SK-N-SH (cell line): ENCODE measurements at regions of chr2 and their contacts with region 1.

Region 1: GRCh38 chr2:113198790-113199612 is 25.2 kb downstream of the PSD4 start:
- DNase-seq: peak; percentile 95
- H3K4me3 ChIP-seq: peak overlapping the region; percentile 66 to 81
- H3K27ac ChIP-seq: no peak overlapping the region; a peak in 1 of 4 replicates
- H3K4me1 ChIP-seq: no peaks in the 10 kb centered on the region; a peak in 1 of 4 replicates
- H3K27me3 ChIP-seq: peaks cover 10% of the 10 kb centered on the region; the same call in 1 of the 2 replicates
- CTCF ChIP-seq: peak; percentile 83
- EP300 ChIP-seq: no peak
- RAD21 ChIP-seq: peak; percentile 36

Region 2: GRCh38 chr2:113181258-113182051 is 17.5 kb before region 1 on chr2:
- CTCF ChIA-PET with region 1: interaction called, 27 read pairs
- POLR2A ChIA-PET with region 1: no interaction called
- DNase-seq: no peak
- H3K4me3 ChIP-seq: no peak overlapping the region
- H3K27ac ChIP-seq: no peak overlapping the region
- H3K4me1 ChIP-seq: no peaks in the 10 kb centered on the region; a peak in 1 of 4 replicates
- H3K27me3 ChIP-seq: peaks cover 5% of the 10 kb centered on the region; the same call in 1 of the 2 replicates
- CTCF ChIP-seq: no peak
- EP300 ChIP-seq: no peak
- RAD21 ChIP-seq: no peak

Region 3: DNA sequence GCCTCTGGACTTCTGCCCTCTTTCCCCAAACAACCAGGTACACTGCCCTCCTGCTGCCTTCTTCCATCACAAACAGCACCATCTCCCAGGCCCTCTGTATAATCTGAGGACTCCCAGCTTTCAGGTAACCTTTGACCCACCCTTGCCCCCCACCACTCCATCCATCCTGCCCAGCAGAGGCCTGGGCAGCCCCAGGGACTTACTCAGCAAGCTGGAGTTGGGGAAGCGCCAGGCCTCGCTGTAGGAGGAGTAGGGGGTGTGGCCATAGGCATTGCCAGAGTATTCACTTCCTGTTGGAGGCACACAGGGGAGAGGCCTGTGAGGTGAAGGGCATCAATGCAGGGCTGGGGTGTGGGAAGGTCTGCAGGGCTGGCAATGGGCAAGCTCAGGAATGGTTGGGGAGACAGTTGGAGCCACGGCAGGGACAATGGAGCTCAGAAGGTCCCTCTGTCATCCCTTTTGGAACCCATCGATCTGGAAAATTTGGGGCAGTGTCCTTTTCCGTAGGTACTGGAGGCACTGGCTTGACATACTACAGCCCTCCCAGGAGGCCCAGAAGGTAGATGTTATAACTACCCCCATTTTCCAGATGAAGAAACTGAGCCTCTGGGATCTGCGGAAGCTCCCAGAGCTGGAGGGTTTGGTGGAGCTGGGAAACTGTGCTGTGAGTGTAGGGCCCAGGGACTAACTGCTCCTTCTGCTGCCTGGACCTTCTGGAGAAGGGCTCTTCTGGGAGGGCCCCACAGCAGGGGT is 21.1 kb after region 1 on chr2:
- CTCF ChIA-PET with region 1: interaction called, 13 read pairs
- POLR2A ChIA-PET with region 1: no interaction called
- DNase-seq: no peak
- H3K4me3 ChIP-seq: no peak overlapping the region
- H3K27ac ChIP-seq: no peak overlapping the region
- H3K4me1 ChIP-seq: no peaks in the 10 kb centered on the region; a peak in 1 of 4 replicates
- H3K27me3 ChIP-seq: no peaks in the 10 kb centered on the region
- CTCF ChIP-seq: no peak
- EP300 ChIP-seq: no peak
- RAD21 ChIP-seq: no peak

Region 4: DNA sequence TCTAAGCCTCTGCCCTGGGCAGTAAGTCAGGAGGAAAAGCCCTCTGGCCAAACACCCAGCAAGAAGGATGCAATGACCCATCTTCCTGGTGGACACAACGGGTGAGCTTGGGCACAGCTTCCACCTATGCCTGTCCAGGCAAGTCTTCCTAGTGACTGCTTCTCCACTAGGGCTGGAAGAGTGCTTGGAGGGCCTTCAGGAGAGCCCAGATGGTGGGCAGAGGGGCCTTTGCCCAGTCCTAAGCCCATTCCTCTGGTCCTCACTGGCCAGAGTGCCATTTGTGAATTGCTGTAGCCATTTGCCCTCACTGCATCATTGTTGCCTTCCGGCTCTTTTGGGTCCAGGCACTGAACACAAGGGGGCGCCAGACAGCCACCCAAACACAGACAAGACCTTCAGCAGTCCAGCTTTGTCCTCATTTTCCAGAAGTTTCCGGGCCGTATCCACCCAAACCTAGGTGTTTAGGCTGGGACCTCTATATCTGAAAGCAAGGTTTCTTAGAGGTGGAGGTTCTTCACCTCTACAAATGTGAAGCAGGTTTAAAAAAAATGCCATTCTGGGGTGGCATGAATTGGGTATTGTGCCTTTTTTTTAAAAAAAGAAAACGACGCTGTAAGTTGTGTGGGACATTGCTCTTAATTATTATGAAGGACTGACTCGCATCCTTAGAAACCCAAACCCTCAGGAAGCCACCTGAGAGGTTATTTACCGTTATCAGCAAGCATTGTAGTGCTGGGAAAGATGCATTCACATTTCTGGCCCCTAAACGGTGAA is 50.2 kb after region 1 on chr2:
- CTCF ChIA-PET with region 1: interaction called, 46 read pairs
- POLR2A ChIA-PET with region 1: no interaction called
- DNase-seq: peak; percentile 77
- H3K4me3 ChIP-seq: no peak overlapping the region; a peak in 1 of 4 replicates
- H3K27ac ChIP-seq: no peak overlapping the region
- H3K4me1 ChIP-seq: no peaks in the 10 kb centered on the region
- H3K27me3 ChIP-seq: no peaks in the 10 kb centered on the region; the same call in 1 of the 2 replicates
- CTCF ChIP-seq: peak; percentile 95
- EP300 ChIP-seq: no peak
- RAD21 ChIP-seq: peak; percentile 83

Region 5: DNA sequence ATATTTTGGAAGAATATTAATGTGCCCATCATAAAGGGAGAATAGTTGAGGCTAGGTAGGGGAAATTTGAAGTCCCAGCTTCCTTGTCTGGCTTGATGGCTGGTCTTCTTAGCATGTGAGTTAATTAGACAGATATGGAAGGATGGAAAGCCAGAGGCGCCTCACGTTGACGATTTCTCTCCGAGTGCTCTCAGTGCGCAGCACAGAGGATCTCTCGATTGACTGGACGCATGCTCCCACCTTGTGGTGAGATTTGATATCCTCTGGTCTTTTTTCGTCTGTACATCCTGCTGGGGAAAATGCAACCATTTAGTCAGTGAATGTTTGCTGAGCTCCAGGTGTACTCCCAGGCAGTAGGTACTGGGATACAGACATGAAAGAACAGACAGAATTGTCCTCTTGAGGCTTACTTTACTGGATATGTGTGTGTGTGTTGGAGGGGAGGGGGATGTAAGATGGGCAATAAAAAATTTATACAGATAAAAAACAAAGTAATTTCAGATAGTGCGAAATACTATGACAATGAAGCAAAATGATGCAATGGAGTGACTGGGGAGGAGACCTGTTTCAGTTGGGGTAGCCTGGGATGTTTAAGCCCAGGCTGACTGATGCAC is 171.6 kb after region 1 on chr2:
- CTCF ChIA-PET with region 1: interaction called, 43 read pairs
- POLR2A ChIA-PET with region 1: no interaction called
- DNase-seq: peak; percentile 58
- H3K4me3 ChIP-seq: no peak overlapping the region; a peak in 1 of 4 replicates
- H3K27ac ChIP-seq: no peak overlapping the region
- H3K4me1 ChIP-seq: no peaks in the 10 kb centered on the region
- H3K27me3 ChIP-seq: peaks cover 21% of the 10 kb centered on the region; the same call in 1 of the 2 replicates
- CTCF ChIP-seq: peak; percentile 69
- EP300 ChIP-seq: no peak
- RAD21 ChIP-seq: peak; percentile 85